ENCODE measurements at regions of chr1 and their contacts with region 1.

Region 1: DNA sequence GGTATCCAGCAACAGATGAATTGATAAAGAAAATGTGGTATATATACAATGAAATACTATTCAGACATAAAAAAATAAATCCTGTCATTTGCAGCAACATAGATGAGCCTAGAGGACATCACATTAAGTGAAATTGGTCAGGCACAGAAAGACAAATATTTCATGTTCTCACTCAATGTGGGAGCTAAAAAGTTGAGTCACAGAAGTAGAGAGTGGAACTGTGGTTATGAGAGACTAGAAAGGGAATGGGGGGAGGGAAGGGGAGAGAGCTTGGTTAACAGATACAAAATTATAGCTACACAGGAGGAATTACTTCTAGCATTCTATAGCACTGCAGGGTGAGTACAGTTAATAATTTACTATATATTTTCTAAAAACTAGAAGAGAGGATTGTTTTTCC is 37.1 kb upstream of the SERPINC1 start:
- DNase-seq: no peak
- ATAC-seq: no peak
- H3K4me3 ChIP-seq: no peak overlapping the region
- H3K27ac ChIP-seq: no peak overlapping the region
- H3K4me1 ChIP-seq: no peaks in the 10 kb centered on the region
- H3K27me3 ChIP-seq: no peaks in the 10 kb centered on the region
- CTCF ChIP-seq: no peak

Region 2: GRCh38 chr1:174074757-174075156 is 120.6 kb after region 1 on chr1:
- CTCF ChIA-PET with region 1: no interaction called
- POLR2A ChIA-PET with region 1: no interaction called
- in situ Hi-C with region 1: no loop called
- intact Hi-C with region 1: no loop called
- DNase-seq: no peak
- ATAC-seq: no peak
- H3K4me3 ChIP-seq: no peak overlapping the region
- H3K27ac ChIP-seq: no peak overlapping the region
- H3K4me1 ChIP-seq: no peaks in the 10 kb centered on the region
- H3K27me3 ChIP-seq: 0 out of 2 replicates have a peak, but pooled peaks cover 2% of the 10 kb centered on the region
- CTCF ChIP-seq: peak; percentile 42; the same call in 1 of the 2 replicates

Region 3: DNA sequence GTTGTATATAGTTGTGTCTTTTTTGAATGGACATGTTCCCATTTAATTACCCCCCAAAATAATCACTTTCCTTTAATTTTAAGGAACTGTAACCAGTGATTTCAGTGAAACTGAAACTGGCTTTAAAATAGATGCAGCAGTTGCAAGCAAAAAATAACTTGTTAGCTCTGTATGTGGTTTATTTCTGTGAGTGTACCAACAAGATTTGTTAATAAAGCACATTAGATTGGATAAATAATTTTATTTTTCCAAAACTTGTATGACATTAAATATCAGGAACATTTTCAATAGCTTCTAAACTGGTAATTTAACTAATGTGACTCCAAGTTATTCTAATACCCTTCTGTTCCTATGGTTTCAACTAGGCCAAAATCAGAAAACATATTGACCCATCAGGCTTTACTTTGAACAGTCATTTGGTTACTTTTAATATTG is 861.3 kb after region 1 on chr1:
- CTCF ChIA-PET with region 1: no interaction called
- POLR2A ChIA-PET with region 1: interaction called, 15 read pairs
- in situ Hi-C with region 1: no loop called
- intact Hi-C with region 1: no loop called
- DNase-seq: no peak
- ATAC-seq: no peak
- H3K4me3 ChIP-seq: no peak overlapping the region
- H3K27ac ChIP-seq: no peak overlapping the region
- H3K4me1 ChIP-seq: no peaks in the 10 kb centered on the region
- H3K27me3 ChIP-seq: no peaks in the 10 kb centered on the region
- CTCF ChIP-seq: no peak

Measured in Panc1 (cell line).